ENCODE measurements at regions of chr7 and their contacts with region 1.

Region 1: GRCh38 chr7:25093268-25093826 is 31.7 kb downstream of the CYCS start:
- DNase-seq: no peak
- H3K4me3 ChIP-seq: no peak overlapping the region
- CTCF ChIP-seq: peak; percentile 87

Region 2: GRCh38 chr7:24757353-24758275 is 335.7 kb before region 1 on chr7 and contains the start of gene GSDME:
- CTCF ChIA-PET with region 1: interaction called, 13 read pairs
- POLR2A ChIA-PET with region 1: no interaction called
- DNase-seq: no peak
- H3K4me3 ChIP-seq: peak within 1 kb of the TSS; percentile 69
- CTCF ChIP-seq: peak; percentile 2

Region 3: DNA sequence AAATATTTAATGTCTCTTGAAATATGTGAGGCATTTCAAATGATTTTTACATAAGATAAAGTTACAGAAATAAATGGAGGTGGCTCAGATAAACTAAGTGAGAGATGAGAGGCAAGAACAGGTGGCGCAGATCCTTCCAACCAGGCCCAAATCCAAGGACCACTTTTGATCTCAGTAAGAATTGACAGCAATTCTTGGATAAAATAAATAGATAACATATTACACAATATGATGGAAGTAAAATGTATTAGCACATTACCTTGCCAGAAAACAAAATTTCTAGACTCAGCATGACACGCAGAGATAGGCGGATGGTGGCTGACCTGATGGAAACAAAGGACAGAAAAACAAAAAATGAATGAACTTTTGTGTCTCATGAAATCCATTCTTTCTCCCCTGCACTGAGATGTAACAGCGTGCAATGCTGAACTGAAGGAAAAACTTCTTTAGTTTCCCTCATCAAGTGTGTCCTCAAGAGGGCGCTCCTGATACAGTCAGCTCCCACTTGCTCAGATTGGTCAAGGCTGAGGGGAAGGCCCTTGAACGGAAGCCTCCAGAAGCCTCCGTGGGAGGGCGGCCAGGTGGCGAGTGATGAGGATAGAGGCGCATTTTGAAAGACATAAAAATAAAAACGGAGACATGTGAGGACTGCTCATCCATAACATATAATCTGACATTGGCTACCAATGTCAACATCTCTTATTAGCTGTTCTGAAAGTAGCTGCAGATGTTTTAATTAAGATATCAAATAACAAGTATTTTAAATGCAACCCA is 273.2 kb before region 1 on chr7:
- CTCF ChIA-PET with region 1: interaction called, 928 read pairs
- POLR2A ChIA-PET with region 1: interaction called, 6 read pairs
- DNase-seq: no peak
- H3K4me3 ChIP-seq: no peak overlapping the region
- CTCF ChIP-seq: peak; percentile 84

Region 4: DNA sequence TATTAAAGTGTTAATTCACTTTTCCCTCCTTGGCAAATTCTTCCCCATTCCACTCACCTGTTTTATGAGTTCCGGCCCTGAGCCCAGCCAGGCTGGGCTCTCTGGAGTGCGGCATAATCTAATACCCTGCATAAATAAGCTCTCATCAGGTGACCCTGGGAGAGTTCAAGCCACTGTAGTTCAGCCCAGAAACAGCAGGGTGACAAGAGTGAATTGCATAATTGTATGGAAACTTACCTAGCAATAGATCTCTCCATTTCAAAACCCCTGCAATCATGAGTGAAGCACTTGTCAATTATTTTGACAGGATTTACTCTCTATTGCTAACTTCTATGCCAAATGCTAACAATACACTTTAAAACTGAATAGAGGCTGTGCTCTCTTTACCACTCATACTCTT is 208.0 kb before region 1 on chr7:
- CTCF ChIA-PET with region 1: interaction called, 20 read pairs
- POLR2A ChIA-PET with region 1: no interaction called
- DNase-seq: no peak
- H3K4me3 ChIP-seq: no peak overlapping the region
- CTCF ChIP-seq: no peak

Region 5: DNA sequence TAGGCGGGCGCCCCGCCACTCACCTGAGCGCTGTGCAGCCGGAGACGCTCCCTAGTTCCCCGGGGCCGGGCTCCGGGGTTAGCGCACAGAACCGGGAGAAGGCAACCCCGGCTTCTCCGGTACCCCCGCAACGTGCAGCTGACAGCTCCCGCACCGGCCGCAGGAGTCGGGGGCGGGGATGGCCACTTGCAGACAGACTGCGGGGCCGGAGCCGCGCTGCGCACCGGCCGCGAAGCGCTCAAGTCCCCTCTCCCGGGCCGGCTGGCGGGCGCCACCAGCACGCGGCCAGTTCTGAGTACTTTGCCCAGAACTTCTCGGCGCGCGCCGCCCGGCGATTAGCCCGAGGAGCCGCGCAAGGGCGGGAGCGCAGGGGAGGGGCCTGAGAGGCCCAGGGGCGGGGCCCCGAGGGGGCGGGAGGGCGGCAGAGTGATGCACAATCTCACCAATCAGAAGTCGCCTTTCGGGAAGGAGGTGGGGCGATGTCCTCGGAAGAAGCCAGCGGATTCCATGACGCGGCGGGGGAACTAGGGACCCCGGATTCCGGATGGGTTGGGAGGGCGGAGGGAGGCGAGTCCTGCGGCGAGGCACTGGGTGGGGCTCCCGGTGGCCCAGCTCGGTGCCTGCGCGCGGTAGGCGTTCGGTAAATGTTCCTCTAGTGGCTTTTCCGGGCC is 113.3 kb before region 1 on chr7 and contains the start of gene OSBPL3:
- CTCF ChIA-PET with region 1: interaction called, 105 read pairs
- POLR2A ChIA-PET with region 1: interaction called, 3 read pairs
- DNase-seq: peak; percentile 66
- H3K4me3 ChIP-seq: peak within 1 kb of the TSS; percentile 76
- CTCF ChIP-seq: no peak

Region 6: GRCh38 chr7:25223206-25223605 is 129.9 kb after region 1 on chr7:
- CTCF ChIA-PET with region 1: no interaction called
- POLR2A ChIA-PET with region 1: no interaction called
- DNase-seq: no peak
- H3K4me3 ChIP-seq: no peak overlapping the region
- CTCF ChIP-seq: no peak

Region 7: DNA sequence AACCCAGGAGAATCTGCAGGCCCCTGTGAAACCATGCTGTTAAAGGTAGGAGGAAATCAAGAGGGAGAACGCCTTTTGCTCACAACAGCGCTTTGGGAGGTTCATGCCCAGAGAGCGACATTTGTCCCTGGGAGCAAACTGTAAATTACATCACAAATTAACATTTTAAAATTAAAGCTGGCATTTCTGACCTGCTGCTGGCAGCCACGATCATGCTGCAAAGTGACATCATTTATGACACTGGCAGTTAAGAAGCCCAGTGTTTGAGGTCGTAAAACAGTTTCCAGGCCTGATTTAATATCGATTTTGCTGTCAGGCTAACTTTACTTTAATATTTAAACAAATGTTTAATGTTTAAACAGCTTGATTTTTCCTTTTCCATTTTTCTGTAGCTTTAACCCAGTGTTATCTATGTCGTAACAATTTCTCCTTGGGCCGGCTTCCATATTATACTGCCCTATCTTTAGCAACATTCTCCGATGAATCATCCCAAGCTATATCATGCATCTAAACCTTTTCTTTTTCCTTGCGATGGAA is 221.5 kb after region 1 on chr7:
- CTCF ChIA-PET with region 1: no interaction called
- POLR2A ChIA-PET with region 1: no interaction called
- DNase-seq: no peak
- H3K4me3 ChIP-seq: no peak overlapping the region
- CTCF ChIP-seq: no peak